Psoas muscle (tissue), 8 donors: ENCODE measurements at regions of chr6 and their contacts with region 1.

Region 1: GRCh38 chr6:39088331-39088730 is 26.7 kb downstream of the SAYSD1 start:
- DNase-seq: peak in 1 of 2 donors; percentile 22
- ATAC-seq: peak; percentile 71 to 87 (median 83)
- H3K4me3 ChIP-seq: no peak overlapping the region
- H3K27ac ChIP-seq: no peak overlapping the region
- H3K4me1 ChIP-seq: peaks cover 31% of the 10 kb centered on the region
- H3K27me3 ChIP-seq: no peaks in the 10 kb centered on the region
- CTCF ChIP-seq: peak; percentile 40

Region 2: GRCh38 chr6:39029156-39030011 is 58.9 kb before region 1 on chr6:
- intact Hi-C with region 1: no loop called
- DNase-seq: no peak
- ATAC-seq: no peak
- H3K4me3 ChIP-seq: no peak overlapping the region
- H3K27ac ChIP-seq: no peak overlapping the region
- H3K4me1 ChIP-seq: no peaks in the 10 kb centered on the region
- H3K27me3 ChIP-seq: peaks cover 0 to 15% (median 0%) of the 10 kb centered on the region in 3 donors
- CTCF ChIP-seq: peak; percentile 33

Region 3: GRCh38 chr6:39302669-39303424 is 214.5 kb after region 1 on chr6:
- intact Hi-C with region 1: loop called in 1 of 2 experiments (anchors 10 kb)
- DNase-seq: peak; percentile 81 to 89
- ATAC-seq: peak; percentile 87 to 89 (median 88)
- H3K4me3 ChIP-seq: no peak overlapping the region
- H3K27ac ChIP-seq: no peak overlapping the region
- H3K4me1 ChIP-seq: no peaks in the 10 kb centered on the region
- H3K27me3 ChIP-seq: no peaks in the 10 kb centered on the region
- CTCF ChIP-seq: peak; percentile 81

Region 4: GRCh38 chr6:39309942-39310531 is 221.7 kb after region 1 on chr6:
- intact Hi-C with region 1: loop called (anchors 5 to 10 kb)
- DNase-seq: peak; percentile 66 to 82
- ATAC-seq: peak; percentile 82 to 91 (median 84)
- H3K4me3 ChIP-seq: no peak overlapping the region
- H3K27ac ChIP-seq: no peak overlapping the region
- H3K4me1 ChIP-seq: peaks cover 12% of the 10 kb centered on the region
- H3K27me3 ChIP-seq: peaks cover 0 to 33% (median 0%) of the 10 kb centered on the region in 3 donors
- CTCF ChIP-seq: peak; percentile 89